Posterior vena cava (tissue), 2 donors: ENCODE measurements at regions of chr9 and their contacts with region 1.

Region 1: GRCh38 chr9:1337161-1337560 is 287.0 kb downstream of the DMRT2 start:
- DNase-seq: no peak

Region 2: GRCh38 chr9:1355656-1356055 is 18.5 kb after region 1 on chr9:
- intact Hi-C with region 1: loop called in 1 of 2 experiments (anchors 1 kb)
- DNase-seq: no peak